ENCODE measurements at regions of chr3 and their contacts with region 1.

Region 1: GRCh38 chr3:44554626-44555592 is at the start of gene ZKSCAN7:
- DNase-seq: peak; percentile 42
- H3K4me3 ChIP-seq: peak within 1 kb of the TSS; percentile 78 to 87 (median 82)
- H3K27ac ChIP-seq: no peak within 1 kb of the TSS
- H3K4me1 ChIP-seq: peaks cover 11% of the 10 kb centered on the region
- H3K27me3 ChIP-seq: no peaks in the 10 kb centered on the region
- CTCF ChIP-seq: peak in 1 of 2 donors; percentile 39
- POLR2A ChIP-seq: peak; percentile 48
- total RNA-seq, gene ZKSCAN7: 0.95 and 1.9 TPM in 2 replicates

Region 2: DNA sequence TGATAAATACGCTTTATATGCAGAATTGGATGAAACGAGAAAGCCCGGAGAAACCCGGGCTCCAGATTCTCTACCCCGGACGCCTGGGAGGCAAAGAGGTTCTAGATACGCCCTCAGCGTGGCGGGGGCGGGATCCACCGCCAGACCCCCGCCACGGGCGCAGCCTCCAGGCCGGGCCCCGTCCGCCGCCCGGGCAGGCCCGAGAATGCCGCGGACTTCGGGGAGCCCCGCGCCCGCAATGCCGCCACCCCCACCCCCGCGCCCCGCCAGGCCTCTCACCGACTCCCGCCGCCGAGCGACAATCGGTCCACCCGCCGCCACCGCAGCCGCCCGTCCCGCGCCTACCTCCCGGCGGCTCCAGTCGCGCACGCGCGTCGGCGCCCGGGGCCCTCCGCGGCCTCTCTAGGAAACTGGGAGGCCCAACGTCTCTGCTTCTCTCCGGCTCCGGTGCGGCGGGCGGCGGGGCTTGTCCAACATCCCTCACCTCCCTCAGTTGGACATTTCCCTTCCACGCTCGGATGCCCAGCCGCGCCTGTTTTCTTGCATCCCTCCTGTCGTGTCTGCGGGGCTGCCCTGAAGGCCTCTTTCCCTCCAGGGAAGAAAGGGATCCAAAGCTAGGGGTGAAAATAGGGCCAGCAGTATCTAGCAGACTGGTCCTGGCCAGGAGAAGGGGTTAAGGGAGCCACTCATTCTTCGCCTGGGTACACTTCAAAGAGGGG is 77.4 kb before region 1 on chr3 and contains the start of gene ZNF445:
- CTCF ChIA-PET with region 1: no interaction called
- POLR2A ChIA-PET with region 1: no interaction called
- dilution Hi-C with region 1: no loop called
- intact Hi-C with region 1: no loop called
- DNase-seq: peak; percentile 78
- H3K4me3 ChIP-seq: peak within 1 kb of the TSS; percentile 61 to 98 (median 98)
- H3K27ac ChIP-seq: peak within 1 kb of the TSS; percentile 35
- H3K4me1 ChIP-seq: peaks cover 11% of the 10 kb centered on the region
- H3K27me3 ChIP-seq: no peaks in the 10 kb centered on the region
- CTCF ChIP-seq: no peak
- POLR2A ChIP-seq: peak; percentile 79
- total RNA-seq, gene ZNF445: 15.0 and 17.8 TPM in 2 replicates

Region 3: GRCh38 chr3:45026957-45027356 is 472.0 kb after region 1 on chr3:
- CTCF ChIA-PET with region 1: no interaction called
- POLR2A ChIA-PET with region 1: no interaction called
- dilution Hi-C with region 1: no loop called
- intact Hi-C with region 1: loop called (anchors 10 kb)
- DNase-seq: no peak
- H3K4me3 ChIP-seq: no peak overlapping the region
- H3K27ac ChIP-seq: no peak overlapping the region
- H3K4me1 ChIP-seq: peaks cover 22% of the 10 kb centered on the region
- H3K27me3 ChIP-seq: no peaks in the 10 kb centered on the region
- CTCF ChIP-seq: no peak
- POLR2A ChIP-seq: no peak